Right lobe of liver (tissue), 6 donors: ENCODE measurements at regions of chr12 and their contacts with region 1.

Region 1: GRCh38 chr12:32659908-32660440 is 19.1 kb upstream of the DNM1L start:
- DNase-seq: no peak
- ATAC-seq: no peak
- H3K4me3 ChIP-seq: no peak overlapping the region
- H3K27ac ChIP-seq: no peak overlapping the region
- H3K4me1 ChIP-seq: no peaks in the 10 kb centered on the region
- H3K27me3 ChIP-seq: no peaks in the 10 kb centered on the region
- CTCF ChIP-seq: no peak
- POLR2A ChIP-seq: no peak

Region 2: DNA sequence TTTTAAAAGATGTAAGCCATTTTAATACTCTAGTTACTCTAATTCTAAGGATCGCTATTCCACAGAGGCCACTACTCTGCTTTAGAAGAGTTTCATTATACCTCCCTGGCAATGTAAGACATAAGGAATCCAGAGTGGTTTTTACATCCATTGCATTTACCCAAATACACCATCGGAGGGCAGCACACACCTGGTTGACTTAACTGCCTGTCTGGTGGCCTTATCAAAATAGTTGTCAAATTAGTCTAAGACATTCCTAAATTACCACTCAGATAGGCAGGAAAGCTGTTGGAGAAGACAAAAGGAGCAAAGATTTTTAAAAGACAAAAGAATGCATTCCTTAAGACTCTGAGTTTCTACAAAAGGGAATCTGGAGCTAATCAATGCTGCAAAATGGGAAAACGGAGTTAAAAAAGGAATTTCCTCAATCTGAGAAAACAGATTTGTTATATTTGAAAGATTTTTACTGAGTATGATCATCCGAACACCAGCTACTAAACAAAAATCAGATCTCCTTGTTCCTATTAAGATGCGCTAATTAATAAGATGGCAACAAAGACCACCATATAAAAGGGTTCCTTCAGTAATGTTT is 294.4 kb before region 1 on chr12:
- intact Hi-C with region 1: loop called (anchors 5 to 10 kb)
- DNase-seq: peak in 1 of 3 donors; percentile 66
- ATAC-seq: peak; percentile 91 to 96 (median 94)
- H3K4me3 ChIP-seq: no peak overlapping the region
- H3K27ac ChIP-seq: no peak overlapping the region
- H3K4me1 ChIP-seq: peaks cover 0 to 6% (median 3%) of the 10 kb centered on the region in 4 donors
- H3K27me3 ChIP-seq: no peaks in the 10 kb centered on the region
- CTCF ChIP-seq: peak; percentile 80 to 94 (median 82)
- POLR2A ChIP-seq: no peak

Region 3: DNA sequence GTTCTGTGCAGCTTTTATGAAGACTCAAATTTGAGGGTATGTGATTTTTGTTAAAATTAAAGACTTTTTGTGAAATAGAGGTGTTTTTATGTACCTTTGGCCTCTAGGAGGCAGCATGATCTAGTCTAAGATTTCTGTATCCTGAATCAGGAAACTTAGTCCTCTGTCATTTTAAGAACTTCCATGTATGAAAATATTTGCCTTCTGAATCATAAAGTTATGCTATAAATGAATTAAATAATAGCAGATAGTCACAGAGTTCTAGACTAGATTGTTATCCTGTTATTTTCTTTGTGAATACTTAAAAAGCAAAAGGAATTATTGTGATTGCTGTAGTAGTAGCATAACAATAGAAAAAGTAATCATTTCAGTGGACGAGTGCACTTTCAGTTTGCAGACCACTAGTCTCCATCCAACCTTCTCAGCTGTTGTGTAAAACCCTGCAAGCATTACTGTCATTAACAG is 204.3 kb before region 1 on chr12:
- intact Hi-C with region 1: loop called in 1 of 2 experiments (anchors 10 kb)
- DNase-seq: no peak
- ATAC-seq: peak; percentile 78 to 84 (median 82)
- H3K4me3 ChIP-seq: peak overlapping the region in 2 of 3 donors; percentile 9 to 32
- H3K27ac ChIP-seq: peak overlapping the region in 2 of 3 donors; percentile 23 to 24
- H3K4me1 ChIP-seq: peaks cover 0 to 15% (median 4%) of the 10 kb centered on the region in 4 donors
- H3K27me3 ChIP-seq: no peaks in the 10 kb centered on the region
- CTCF ChIP-seq: peak; percentile 60 to 71 (median 68)
- POLR2A ChIP-seq: no peak